Activated B cell treated with CpG ODN at 0.5 μM for 24 hours (primary cell): ENCODE measurements at regions of chr11 and their contacts with region 1.

Region 1: DNA sequence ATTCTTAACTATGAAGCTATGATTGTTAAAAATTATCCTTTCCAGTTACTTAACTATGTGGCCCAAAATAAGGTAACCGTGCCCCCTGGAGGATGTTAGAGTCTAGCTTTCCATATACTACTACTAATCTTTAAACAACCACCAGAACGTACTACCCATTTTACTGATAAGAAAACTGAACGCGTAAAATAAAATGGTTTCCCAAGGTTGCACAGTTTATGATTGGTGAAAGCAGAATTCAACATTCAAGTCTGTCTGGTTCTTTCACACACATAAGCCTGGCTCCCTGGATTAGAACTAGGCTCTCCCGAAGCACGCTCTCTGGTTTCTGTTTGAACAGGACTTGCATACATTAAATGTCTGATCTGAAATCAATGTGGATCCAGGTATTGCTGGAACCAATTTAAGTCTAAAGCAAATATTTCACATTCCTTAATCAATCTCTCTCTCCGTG is 437.9 kb upstream of the CCDC90B start:
- DNase-seq: no peak
- ATAC-seq: peak; percentile 69
- H3K4me3 Mint-ChIP-seq: peak overlapping the region; percentile 62
- H3K27ac Mint-ChIP-seq: no peak overlapping the region
- H3K4me1 Mint-ChIP-seq: peaks cover 22% of the 10 kb centered on the region
- H3K27me3 Mint-ChIP-seq: peaks cover 3% of the 10 kb centered on the region
- CTCF ChIP-seq: no peak

Region 2: GRCh38 chr11:82682003-82682751 is 1041.9 kb before region 1 on chr11:
- CTCF ChIA-PET with region 1: no interaction called
- POLR2A ChIA-PET with region 1: no interaction called
- intact Hi-C with region 1: loop called (anchors 2 kb)
- DNase-seq: no peak
- ATAC-seq: peak; percentile 28
- H3K4me3 Mint-ChIP-seq: no peak overlapping the region
- H3K27ac Mint-ChIP-seq: no peak overlapping the region
- H3K4me1 Mint-ChIP-seq: no peaks in the 10 kb centered on the region
- H3K27me3 Mint-ChIP-seq: peaks cover 13% of the 10 kb centered on the region
- CTCF ChIP-seq: no peak

Region 3: DNA sequence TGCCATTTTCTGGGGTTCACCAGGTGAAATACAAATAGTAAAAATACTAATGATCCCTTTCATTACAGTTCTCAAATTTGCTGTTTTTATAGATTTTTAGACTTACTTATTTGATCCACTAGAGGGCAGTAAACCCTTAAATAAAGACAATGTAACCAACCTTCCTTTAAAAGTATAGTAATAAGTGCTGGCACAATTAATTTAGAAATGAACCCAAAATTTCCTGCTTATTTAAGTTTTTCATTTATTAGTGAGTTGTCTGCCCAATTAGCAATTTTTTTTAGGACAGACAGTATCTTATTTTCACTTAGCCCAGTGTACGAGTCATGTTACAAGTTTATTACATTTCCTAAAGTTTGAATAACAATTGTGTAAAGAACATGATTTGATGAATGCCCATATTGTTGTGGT is 817.8 kb before region 1 on chr11:
- CTCF ChIA-PET with region 1: no interaction called
- POLR2A ChIA-PET with region 1: no interaction called
- intact Hi-C with region 1: loop called (anchors 1 kb)
- DNase-seq: no peak
- ATAC-seq: no peak
- H3K4me3 Mint-ChIP-seq: no peak overlapping the region
- H3K27ac Mint-ChIP-seq: peak overlapping the region; percentile 38
- H3K4me1 Mint-ChIP-seq: peaks cover 44% of the 10 kb centered on the region
- H3K27me3 Mint-ChIP-seq: no peaks in the 10 kb centered on the region
- CTCF ChIP-seq: peak; percentile 35

Region 4: DNA sequence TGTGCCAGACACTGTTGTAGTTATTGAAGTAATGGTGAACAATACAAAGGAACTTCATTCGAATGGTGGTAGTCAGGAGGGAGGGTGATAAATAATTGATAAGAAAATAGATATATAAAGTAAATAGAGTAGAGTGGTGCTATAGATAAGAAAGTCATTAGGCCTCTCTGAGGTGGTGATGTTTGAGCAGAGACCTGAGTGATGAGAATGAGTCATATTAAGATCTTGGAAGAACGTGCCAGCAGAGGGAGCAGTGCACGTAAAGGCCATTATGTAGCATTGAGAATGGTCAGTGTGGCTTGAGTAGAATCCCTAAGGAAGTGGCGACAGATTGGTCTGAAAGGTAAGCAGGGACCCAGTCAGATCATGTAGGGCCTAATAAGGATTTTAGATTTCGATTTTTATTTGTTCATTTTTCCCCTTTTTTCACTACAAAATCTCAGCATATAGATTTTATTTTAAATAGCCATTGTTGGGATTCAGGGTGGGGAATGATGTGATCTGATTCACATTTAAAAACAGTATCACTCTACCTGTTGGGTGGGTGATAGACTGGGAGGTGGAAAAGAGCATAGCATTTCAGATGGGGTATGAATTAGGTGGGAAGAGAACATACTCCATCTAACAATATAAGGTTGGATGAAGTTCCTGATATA is 482.6 kb before region 1 on chr11:
- CTCF ChIA-PET with region 1: no interaction called
- POLR2A ChIA-PET with region 1: no interaction called
- intact Hi-C with region 1: loop called (anchors 1 kb)
- DNase-seq: no peak
- ATAC-seq: peak; percentile 47
- H3K4me3 Mint-ChIP-seq: no peak overlapping the region
- H3K27ac Mint-ChIP-seq: no peak overlapping the region
- H3K4me1 Mint-ChIP-seq: no peaks in the 10 kb centered on the region
- H3K27me3 Mint-ChIP-seq: no peaks in the 10 kb centered on the region
- CTCF ChIP-seq: no peak

Region 5: GRCh38 chr11:83292709-83293456 is 431.2 kb before region 1 on chr11:
- CTCF ChIA-PET with region 1: interaction called, 44 read pairs
- POLR2A ChIA-PET with region 1: no interaction called
- intact Hi-C with region 1: loop called (anchors 1 kb)
- DNase-seq: no peak
- ATAC-seq: peak; percentile 79
- H3K4me3 Mint-ChIP-seq: peak overlapping the region; percentile 21
- H3K27ac Mint-ChIP-seq: no peak overlapping the region
- H3K4me1 Mint-ChIP-seq: peaks cover 14% of the 10 kb centered on the region
- H3K27me3 Mint-ChIP-seq: no peaks in the 10 kb centered on the region
- CTCF ChIP-seq: no peak

Region 6: GRCh38 chr11:83736689-83737088 is 12.7 kb after region 1 on chr11:
- CTCF ChIA-PET with region 1: interaction called, 5 read pairs
- POLR2A ChIA-PET with region 1: interaction called, 16 read pairs
- intact Hi-C with region 1: no loop called
- DNase-seq: no peak
- ATAC-seq: no peak
- H3K4me3 Mint-ChIP-seq: no peak overlapping the region
- H3K27ac Mint-ChIP-seq: no peak overlapping the region
- H3K4me1 Mint-ChIP-seq: no peaks in the 10 kb centered on the region
- H3K27me3 Mint-ChIP-seq: peaks cover 15% of the 10 kb centered on the region
- CTCF ChIP-seq: no peak